Activated CD4-positive, alpha-beta T cell treated with anti-CD3 and anti-CD28 coated beads, Interleukin-2, amount 10 ng/mL, durations not matched to agents 7 days and 5 days (primary cell): ENCODE measurements at regions of chr2 and their contacts with region 1.

Region 1: DNA sequence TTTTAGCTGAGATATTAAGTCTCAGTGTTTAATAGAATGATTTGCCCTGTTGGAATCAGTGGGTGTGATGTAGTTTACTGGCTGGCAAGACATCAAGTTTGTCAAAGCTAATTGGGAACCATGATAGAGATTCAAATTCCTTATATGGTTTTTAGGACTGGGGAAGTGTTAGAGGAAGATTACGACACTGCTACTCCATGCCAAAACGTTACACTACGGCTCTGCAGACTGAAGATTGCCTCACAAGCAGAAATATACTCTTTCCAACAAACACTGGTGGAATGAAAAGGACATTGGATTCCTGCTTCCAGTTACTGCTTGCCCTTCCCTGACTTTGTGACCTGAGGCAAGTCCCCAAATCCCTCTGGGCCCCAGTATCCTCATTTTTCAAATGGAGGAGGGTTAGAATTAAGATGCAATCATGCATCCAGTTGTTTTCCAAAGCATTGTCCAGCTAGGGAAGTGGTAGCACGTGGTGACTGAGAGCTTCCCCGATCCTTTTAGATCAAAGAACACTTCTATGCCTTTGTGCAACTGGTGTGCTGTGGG is 147.6 kb downstream of the CDC42EP3 start:
- DNase-seq: no peak
- H3K4me3 Mint-ChIP-seq: no peak overlapping the region
- H3K27ac Mint-ChIP-seq: no peak overlapping the region
- H3K4me1 Mint-ChIP-seq: no peaks in the 10 kb centered on the region
- H3K27me3 Mint-ChIP-seq: peaks cover 9% of the 10 kb centered on the region

Region 2: GRCh38 chr2:37453027-37453426 is 70.9 kb before region 1 on chr2:
- CTCF ChIA-PET with region 1: no interaction called
- POLR2A ChIA-PET with region 1: interaction called, 12 read pairs
- DNase-seq: no peak
- H3K4me3 Mint-ChIP-seq: no peak overlapping the region
- H3K27ac Mint-ChIP-seq: no peak overlapping the region
- H3K4me1 Mint-ChIP-seq: peaks cover 33% of the 10 kb centered on the region
- H3K27me3 Mint-ChIP-seq: no peaks in the 10 kb centered on the region